ENCODE measurements at regions of chr11 and their contacts with region 1.

Region 1: DNA sequence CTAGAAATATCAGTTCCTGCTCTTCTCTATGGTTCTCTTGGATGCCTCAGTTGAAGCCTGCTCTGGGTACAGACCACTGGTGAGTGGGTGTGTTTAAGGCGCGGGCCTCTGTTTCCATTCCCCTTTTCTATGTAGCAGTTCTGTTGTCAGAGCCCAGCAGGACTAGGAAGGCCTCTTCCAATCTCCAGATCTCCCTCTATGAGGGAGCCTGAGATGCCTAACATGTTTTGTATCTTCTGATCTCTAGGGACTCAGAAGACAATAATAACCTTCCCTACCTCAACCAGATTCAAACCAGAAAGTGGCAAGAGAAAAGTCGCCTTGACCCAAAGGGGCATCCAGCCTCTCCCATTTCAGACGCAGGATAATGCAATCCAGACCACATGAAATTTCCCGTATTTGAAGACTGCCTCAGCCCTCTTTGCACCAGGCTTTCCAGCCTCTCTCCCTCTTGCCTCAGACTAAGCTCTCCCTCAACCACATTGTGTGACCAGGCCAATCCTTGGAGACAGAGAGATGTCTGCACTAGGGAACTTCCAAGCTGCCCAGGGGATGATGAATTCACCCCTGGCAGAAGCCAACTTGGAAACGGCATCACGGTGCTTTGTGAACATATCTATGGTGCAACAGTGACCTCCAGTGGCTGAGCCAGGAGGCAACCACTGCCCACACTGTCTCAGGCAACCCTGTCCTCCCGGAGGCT is 150.1 kb upstream of the UBASH3B start:
- DNase-seq: peak; percentile 95
- H3K4me3 ChIP-seq: no peak overlapping the region
- H3K27ac ChIP-seq: no peak overlapping the region
- H3K4me1 ChIP-seq: peaks cover 4 to 12% (median 6%) of the 10 kb centered on the region in 4 donors
- H3K27me3 ChIP-seq: no peaks in the 10 kb centered on the region
- CTCF ChIP-seq: peak; percentile 78 to 89 (median 86)
- EP300 ChIP-seq: no peak
- POLR2A ChIP-seq: no peak

Region 2: DNA sequence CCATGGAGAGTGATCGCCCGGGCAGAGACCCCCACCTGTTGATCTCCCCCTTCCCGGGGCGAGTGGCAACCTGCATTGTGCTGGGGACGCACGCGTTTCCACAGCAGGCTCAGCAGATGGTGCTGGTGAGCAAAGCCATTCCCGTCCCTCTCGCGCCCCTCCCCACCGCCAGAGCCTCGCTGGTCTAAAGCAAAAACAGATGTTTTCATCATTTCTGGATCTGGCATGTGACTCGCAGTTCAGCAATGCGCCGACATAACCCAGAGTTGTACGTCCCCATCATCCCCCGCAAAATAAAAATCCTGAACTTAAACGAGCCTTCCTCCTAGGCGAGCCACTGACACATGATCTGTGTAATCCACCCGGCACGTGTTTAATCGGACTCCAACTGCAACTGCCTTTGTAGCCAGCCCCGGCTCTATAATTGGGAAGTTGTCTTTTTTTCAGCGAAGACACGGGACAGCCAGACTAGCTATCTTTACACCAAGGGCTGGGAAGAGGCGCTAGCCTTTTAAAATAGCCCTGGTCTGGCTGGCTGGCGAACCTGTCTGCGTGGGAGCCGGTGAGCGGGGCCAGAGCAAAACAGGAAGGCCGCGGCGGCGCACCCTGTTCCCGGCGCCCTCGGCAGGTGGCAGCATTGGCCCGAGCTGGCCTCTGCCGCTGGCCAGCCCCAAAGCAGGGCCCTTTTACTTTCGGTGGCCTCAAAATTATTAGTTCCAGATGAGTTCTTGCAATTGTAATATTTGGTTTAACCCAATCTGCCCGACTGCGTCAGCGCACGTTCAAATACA is 849.7 kb before region 1 on chr11:
- intact Hi-C with region 1: loop called (anchors 2 kb)
- DNase-seq: peak; percentile 96
- H3K4me3 ChIP-seq: peak overlapping the region; percentile 47 to 61 (median 51)
- H3K27ac ChIP-seq: peak overlapping the region; percentile 86 to 92 (median 88)
- H3K4me1 ChIP-seq: peaks cover 10 to 34% (median 31%) of the 10 kb centered on the region in 4 donors
- H3K27me3 ChIP-seq: no peaks in the 10 kb centered on the region
- CTCF ChIP-seq: peak; percentile 80 to 93 (median 91)
- EP300 ChIP-seq: peak; percentile 36
- POLR2A ChIP-seq: no peak

Region 3: DNA sequence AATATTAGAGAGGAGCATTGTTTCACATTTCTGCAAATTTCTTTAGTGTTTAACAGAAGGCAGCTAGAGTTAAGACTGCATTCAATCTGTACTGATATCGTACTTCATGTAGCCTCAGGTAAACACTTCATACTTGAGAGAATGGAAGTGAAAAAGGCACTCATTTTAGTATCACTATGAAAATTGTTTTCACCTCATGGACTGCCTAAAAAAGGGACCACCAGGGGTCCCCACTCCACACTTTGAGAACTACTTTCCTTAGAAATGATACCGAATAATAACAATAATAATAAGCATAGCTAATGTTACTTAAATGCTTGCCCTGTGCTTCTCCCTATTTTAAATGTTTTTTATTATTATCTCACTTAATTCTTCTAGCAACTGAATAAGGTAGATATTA is 484.6 kb before region 1 on chr11:
- intact Hi-C with region 1: loop called (anchors 10 kb)
- DNase-seq: no peak
- H3K4me3 ChIP-seq: no peak overlapping the region
- H3K27ac ChIP-seq: no peak overlapping the region
- H3K4me1 ChIP-seq: peaks cover 0 to 3% (median 0%) of the 10 kb centered on the region in 4 donors
- H3K27me3 ChIP-seq: no peaks in the 10 kb centered on the region
- CTCF ChIP-seq: peak; percentile 39 to 53 (median 49)
- EP300 ChIP-seq: no peak
- POLR2A ChIP-seq: no peak

Region 4: DNA sequence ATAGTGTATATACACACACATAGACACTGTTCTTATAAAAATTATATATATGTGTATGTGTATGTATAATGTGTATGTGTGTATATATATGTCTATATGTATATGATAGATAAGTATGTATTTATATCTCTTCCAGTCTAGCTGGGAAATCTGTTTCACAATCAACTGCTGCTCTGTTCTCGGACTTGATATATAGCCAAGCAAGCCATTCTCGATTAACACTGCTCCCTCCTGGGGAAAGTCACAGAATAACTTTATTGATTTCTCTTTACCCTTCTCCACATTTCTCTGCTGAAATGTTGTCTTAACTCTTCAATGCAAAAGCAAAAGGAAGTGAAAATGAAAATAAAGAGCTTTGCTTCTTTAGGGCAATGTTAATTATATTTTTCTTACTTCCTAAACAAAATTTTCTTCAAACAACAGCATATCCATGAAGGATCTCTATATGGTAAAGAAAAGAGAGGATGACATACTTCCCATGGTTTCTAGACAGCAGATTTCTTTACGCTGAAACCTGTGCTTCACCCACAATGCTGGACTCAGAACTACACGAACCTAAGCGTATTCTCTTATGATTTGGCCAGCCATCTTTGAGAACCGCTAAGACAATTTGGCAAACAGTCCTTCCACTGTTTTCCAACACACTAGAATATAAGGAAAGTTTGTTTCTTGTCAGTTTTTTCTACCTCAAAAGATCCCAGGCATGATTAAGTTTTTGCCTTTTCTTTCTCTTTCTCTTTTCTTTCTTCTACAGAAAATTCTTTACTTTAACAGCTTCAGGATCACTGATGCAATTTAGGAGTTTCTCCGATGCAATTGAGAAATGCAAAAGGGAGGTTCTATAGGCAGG is 391.4 kb before region 1 on chr11:
- intact Hi-C with region 1: loop called (anchors 5 kb)
- DNase-seq: no peak
- H3K4me3 ChIP-seq: peak overlapping the region in 2 of 4 donors; percentile 14 to 17
- H3K27ac ChIP-seq: peak overlapping the region; percentile 37 to 60 (median 48)
- H3K4me1 ChIP-seq: peaks cover 0 to 30% (median 23%) of the 10 kb centered on the region in 4 donors
- H3K27me3 ChIP-seq: no peaks in the 10 kb centered on the region
- CTCF ChIP-seq: no peak
- EP300 ChIP-seq: no peak
- POLR2A ChIP-seq: no peak

Region 5: GRCh38 chr11:122215244-122215992 is 290.0 kb before region 1 on chr11:
- intact Hi-C with region 1: loop called (anchors 2 kb)
- DNase-seq: no peak
- H3K4me3 ChIP-seq: no peak overlapping the region
- H3K27ac ChIP-seq: peak overlapping the region in 3 of 4 donors; percentile 4 to 38 (median 29)
- H3K4me1 ChIP-seq: peaks cover 18 to 43% (median 31%) of the 10 kb centered on the region in 4 donors
- H3K27me3 ChIP-seq: no peaks in the 10 kb centered on the region
- CTCF ChIP-seq: peak in 2 of 3 experiments; percentile 92 to 93
- EP300 ChIP-seq: no peak
- POLR2A ChIP-seq: no peak

Region 6: GRCh38 chr11:122293296-122294023 is 212.0 kb before region 1 on chr11:
- intact Hi-C with region 1: loop called (anchors 2 kb)
- DNase-seq: no peak
- H3K4me3 ChIP-seq: no peak overlapping the region
- H3K27ac ChIP-seq: no peak overlapping the region
- H3K4me1 ChIP-seq: no peaks in the 10 kb centered on the region
- H3K27me3 ChIP-seq: no peaks in the 10 kb centered on the region
- CTCF ChIP-seq: peak in 2 of 3 experiments; percentile 21 to 28
- EP300 ChIP-seq: no peak
- POLR2A ChIP-seq: no peak

Region 7: DNA sequence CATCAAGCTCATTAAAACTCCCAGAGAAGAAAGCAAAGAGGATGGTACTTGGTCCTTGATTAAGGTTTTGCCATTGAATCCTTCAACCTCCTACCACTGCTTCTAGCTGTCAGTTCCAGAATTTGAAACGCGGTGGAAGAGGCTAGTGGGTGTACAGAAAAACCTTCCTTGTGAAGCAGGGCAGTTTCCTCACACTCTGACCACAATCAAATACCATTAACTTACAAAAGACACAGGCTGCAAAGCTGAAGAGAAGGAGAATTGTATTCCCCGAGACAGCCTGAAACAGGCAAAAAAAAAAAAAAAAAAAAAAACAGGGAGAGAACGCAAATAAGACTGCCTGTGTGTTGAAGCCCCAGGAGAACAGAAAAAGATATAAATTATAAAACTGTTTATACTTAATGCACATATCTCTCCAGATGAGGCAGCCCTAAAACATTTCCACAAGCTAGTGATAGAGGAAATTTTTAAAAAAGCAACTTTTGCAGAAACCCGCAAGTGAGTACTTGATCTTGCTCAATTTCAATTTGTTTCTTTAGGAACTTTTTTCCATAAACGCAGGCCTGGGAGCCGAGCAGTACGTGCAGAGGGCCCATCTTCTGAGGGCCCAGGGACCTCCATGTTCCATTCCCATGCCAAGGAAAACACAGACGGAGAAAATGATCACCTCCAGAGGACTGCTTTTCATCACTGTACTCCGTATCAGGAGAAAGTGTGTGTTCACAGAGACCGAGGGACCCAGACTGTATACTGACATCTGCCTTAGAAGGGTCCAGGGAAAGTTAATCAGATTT is 170.7 kb before region 1 on chr11:
- intact Hi-C with region 1: no loop called
- DNase-seq: no peak
- H3K4me3 ChIP-seq: no peak overlapping the region
- H3K27ac ChIP-seq: no peak overlapping the region
- H3K4me1 ChIP-seq: no peaks in the 10 kb centered on the region
- H3K27me3 ChIP-seq: no peaks in the 10 kb centered on the region
- CTCF ChIP-seq: no peak
- EP300 ChIP-seq: no peak
- POLR2A ChIP-seq: no peak

Region 8: DNA sequence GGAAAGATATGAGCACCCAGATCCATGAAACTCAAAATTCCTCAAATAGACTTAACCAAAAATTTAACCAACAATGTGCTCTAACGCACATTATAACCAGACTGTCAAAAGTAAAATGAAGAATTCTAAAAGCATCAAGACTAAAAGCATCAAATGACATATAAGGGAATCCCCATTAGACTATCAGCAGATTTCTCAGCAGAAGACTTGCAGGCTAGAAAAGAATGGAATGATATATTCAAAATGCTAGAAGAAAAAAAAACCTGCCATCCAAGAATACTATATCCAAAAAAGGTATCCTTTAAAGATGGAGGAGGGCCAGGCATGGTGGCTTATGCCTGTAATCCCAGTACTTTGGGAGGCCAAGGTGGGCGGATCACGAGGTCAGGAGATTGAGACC is 32.6 kb after region 1 on chr11:
- intact Hi-C with region 1: no loop called
- DNase-seq: no peak
- H3K4me3 ChIP-seq: no peak overlapping the region
- H3K27ac ChIP-seq: no peak overlapping the region
- H3K4me1 ChIP-seq: no peaks in the 10 kb centered on the region
- H3K27me3 ChIP-seq: no peaks in the 10 kb centered on the region
- CTCF ChIP-seq: no peak
- EP300 ChIP-seq: no peak
- POLR2A ChIP-seq: no peak